Activated CD4-positive, alpha-beta memory T cell treated with anti-CD3 and anti-CD28 coated beads, Interleukin-2, amount 10 ng/mL, durations not matched to agents 7 days and 5 days (primary cell): ENCODE measurements at regions of chr16 and their contacts with region 1.

Region 1: DNA sequence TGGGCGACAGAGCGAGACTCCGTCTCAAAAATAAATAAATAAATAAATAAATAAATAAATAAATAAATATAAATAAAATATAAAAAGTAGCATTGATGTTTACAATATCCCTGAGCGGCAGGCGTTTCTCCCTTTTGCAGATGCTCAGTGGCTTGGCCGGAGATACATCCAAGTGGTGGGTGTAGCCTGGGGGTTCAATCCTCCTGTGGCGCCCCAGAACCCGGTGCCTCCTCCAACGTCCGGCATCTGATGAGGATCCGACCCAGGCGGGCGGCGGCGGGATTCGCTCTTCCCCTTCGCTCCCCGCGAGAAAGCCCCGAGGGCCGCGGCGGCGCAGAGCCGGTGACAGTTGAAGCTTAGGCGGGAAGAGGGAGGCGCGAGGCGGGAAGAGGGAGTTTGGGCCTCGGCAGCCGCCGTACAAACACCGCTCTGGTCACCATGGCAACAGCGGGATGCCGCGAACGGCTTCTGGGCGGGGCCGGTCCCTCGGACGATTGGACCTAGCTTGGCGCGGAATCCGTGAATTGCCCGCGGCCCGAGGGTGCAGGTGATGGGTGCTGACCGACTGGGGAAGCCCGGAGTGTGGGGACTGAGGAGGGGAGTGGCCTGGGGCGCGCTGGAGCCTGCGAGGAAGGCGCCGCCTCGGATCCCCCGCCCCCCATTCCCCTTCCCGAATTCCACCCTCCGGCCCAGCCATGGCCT is 12.7 kb upstream of the ALDOA start:
- DNase-seq: peak; percentile 94
- H3K4me3 Mint-ChIP-seq: peak overlapping the region; percentile 84
- H3K27ac Mint-ChIP-seq: peak overlapping the region; percentile 42
- H3K4me1 Mint-ChIP-seq: peaks cover 40% of the 10 kb centered on the region
- H3K27me3 Mint-ChIP-seq: no peaks in the 10 kb centered on the region

Region 2: DNA sequence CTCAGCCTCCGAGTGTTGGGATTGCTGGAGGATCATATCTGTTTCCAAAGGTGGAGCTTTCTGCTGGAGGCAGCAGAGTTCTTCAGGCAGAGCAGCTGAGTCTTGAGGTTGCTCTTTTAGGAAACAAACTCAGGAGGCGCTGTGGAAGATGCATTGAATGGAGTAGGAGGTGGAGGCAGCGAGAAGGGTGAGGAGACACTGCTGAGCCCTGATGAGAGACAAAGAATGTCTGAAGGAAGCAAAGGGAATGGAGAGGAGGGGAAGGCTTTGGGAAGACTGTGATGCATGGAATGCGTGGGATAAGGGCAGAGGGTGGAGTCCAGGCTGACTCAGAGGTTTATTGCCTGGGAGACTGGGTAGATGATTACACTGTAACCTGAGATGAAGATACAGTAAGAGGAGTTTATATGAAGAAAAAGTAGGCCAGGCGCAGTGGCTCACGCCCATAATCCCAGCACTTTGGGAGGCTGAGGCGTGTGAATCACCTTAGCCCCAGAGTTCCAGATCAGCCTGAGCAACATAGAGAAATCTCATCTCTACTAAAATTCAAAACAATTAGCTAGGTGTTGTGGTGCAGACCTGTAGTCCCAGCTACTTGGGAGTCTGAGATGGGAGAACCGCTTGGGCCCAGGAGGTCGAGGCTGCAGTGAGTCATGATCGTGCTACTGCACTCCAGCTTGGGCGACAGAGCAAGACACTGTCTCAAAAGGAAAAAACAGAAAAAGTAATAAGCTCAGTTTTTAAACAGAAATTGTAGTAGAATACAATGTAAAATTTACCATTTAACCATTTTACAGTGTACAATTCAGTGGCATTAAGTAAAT is 108.8 kb before region 1 on chr16:
- CTCF ChIA-PET with region 1: no interaction called
- POLR2A ChIA-PET with region 1: no interaction called
- DNase-seq: no peak
- H3K4me3 Mint-ChIP-seq: no peak overlapping the region
- H3K27ac Mint-ChIP-seq: no peak overlapping the region
- H3K4me1 Mint-ChIP-seq: no peaks in the 10 kb centered on the region
- H3K27me3 Mint-ChIP-seq: peaks cover 10% of the 10 kb centered on the region

Region 3: DNA sequence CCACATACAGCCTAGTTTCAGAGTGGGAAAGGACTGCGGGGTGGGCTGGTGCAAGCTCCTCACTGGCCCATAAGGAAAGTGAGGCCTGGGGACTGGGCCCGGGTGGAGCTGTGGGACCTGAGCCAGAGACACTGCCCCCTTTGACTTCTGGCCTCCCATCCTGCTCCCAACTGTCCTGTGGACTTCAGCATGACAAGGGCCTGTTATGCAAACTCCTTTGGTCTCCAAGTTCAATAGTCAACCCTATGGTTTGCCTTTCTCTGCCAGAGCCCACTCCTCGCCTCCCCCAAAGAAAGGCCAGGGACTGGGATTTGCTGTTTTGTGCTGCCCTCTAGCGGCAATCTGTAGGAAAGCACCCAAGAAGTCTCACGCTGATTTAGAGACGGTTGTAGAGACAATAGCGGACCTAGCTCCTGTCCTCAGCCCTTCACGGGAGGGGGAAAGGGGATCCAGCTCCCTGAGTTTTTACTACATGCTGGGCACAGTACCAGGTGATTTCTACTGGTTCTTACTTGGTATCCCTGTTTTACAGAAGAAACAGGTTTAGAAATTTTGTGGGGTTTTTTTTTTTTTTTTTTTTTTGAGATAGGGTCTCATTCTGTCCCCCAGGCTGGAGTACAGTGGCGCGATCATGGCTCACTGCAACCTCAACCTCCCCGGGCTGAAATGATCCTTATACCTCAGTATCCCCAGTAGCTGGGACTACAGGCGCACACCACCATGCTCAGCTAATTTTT is 20.6 kb before region 1 on chr16:
- CTCF ChIA-PET with region 1: interaction called, 15 read pairs
- POLR2A ChIA-PET with region 1: no interaction called
- DNase-seq: peak; percentile 72
- H3K4me3 Mint-ChIP-seq: no peak overlapping the region
- H3K27ac Mint-ChIP-seq: no peak overlapping the region
- H3K4me1 Mint-ChIP-seq: peaks cover 25% of the 10 kb centered on the region
- H3K27me3 Mint-ChIP-seq: peaks cover 45% of the 10 kb centered on the region

Region 4: DNA sequence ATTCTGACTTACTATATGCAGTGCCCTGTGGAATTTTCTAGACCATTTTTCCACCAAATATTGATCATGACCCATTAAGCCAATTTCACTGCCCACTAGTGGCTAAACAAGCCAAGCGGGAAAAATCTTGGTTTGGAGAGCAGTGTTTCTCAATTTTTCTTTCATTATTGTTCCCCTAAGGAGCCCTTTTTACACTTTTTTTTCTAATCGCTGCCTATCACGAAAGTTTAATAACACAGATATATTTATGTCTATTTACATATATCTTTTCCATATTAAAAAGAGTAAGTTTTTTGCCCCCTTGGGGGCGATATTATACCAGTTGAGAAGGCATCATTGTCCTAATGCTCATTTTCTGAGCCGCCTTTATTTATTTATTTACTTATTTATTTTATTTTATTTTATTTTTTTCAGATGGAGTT is 11.0 kb before region 1 on chr16:
- CTCF ChIA-PET with region 1: interaction called, 15 read pairs
- POLR2A ChIA-PET with region 1: interaction called, 3 read pairs
- DNase-seq: no peak
- H3K4me3 Mint-ChIP-seq: no peak overlapping the region
- H3K27ac Mint-ChIP-seq: no peak overlapping the region
- H3K4me1 Mint-ChIP-seq: peaks cover 6% of the 10 kb centered on the region
- H3K27me3 Mint-ChIP-seq: peaks cover 11% of the 10 kb centered on the region

Region 5: DNA sequence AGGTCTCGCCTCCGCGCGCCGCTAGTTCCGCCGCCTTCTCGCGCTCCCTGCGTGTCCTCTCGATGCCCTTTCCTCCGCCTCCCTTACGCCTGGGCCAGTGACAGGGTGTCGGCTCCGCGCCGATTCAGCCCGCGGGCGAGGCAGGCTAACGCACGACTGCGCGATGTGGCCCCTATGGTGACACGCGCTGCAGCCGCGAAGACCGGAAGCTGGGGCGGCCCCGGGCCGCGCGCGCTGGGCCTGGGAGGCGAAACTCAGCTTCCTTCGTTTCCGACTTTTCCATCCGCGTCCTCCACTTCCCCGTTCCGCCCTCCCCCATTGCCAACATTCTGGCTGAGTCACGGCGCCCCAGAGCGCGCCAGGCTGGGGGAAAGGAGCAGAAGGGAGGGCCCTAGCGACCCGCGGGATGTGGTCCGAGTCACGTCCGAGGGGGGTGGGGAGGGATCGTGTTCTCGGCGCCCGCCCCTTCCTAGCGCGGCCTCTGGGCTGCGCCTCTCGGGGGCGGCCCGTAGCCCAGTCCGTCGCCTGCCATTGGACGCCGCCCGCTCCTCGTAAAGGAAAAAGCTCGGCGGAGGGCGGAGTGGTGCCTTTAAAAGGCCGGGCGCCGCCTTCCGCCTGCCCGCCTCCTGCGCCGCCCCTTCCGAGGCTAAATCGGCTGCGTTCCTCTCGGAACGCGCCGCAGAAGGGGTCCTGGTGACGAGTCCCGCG is 12.5 kb after region 1 on chr16 and contains the start of gene ALDOA:
- CTCF ChIA-PET with region 1: interaction called, 31 read pairs
- POLR2A ChIA-PET with region 1: interaction called, 111 read pairs
- DNase-seq: peak; percentile 97
- H3K4me3 Mint-ChIP-seq: peak within 1 kb of the TSS; percentile 95
- H3K27ac Mint-ChIP-seq: peak within 1 kb of the TSS; percentile 99
- H3K4me1 Mint-ChIP-seq: peaks cover 36% of the 10 kb centered on the region
- H3K27me3 Mint-ChIP-seq: no peaks in the 10 kb centered on the region
- total RNA-seq, gene ALDOA: 1,403 to 1,450 TPM